ENCODE measurements at regions of chr2 and their contacts with region 1.

Region 1: GRCh38 chr2:110157153-110157793 is 41.7 kb upstream of the MALL start:
- DNase-seq: peak; percentile 44
- ATAC-seq: peak; percentile 71
- H3K4me3 Mint-ChIP-seq: no peak overlapping the region
- H3K27ac Mint-ChIP-seq: no peak overlapping the region
- H3K4me1 Mint-ChIP-seq: no peaks in the 10 kb centered on the region
- H3K27me3 Mint-ChIP-seq: no peaks in the 10 kb centered on the region

Region 2: GRCh38 chr2:110170102-110170501 is 12.8 kb after region 1 on chr2:
- CTCF ChIA-PET with region 1: interaction called, 14 read pairs
- POLR2A ChIA-PET with region 1: no interaction called
- DNase-seq: no peak
- ATAC-seq: no peak
- H3K4me3 Mint-ChIP-seq: no peak overlapping the region
- H3K27ac Mint-ChIP-seq: no peak overlapping the region
- H3K4me1 Mint-ChIP-seq: peaks cover 7% of the 10 kb centered on the region
- H3K27me3 Mint-ChIP-seq: peaks cover 11% of the 10 kb centered on the region